ENCODE measurements at regions of chr6 and their contacts with region 1.

Region 1: DNA sequence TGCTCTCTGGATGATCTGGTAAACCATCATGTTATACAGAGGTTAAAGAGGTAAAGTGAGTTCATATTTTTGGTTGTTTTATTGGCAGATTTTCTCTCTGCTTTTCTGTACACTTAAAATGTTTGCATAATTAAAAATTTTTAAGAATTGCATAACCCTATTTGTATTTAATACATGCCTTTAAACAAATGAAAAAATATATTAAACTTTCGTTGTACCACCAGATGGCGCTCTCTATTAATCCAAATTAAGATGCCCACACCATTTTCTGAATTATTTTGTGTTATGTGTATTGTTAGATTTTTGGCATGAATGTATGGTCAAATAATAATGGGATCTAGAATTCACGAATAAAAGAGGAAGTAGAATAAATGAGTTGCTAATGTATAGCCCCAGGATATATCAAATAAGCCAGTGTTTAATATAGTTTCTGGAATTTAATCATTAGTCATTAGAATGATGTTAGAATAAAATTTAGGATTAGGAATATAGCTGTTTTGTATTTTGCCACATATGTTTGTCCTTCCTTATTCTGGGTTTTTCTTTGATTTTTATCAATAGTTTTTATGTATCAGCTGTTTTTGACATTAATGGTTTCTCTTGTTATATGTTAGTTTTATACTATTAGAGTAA is 38.9 kb downstream of the SMAP1 start:
- DNase-seq: no peak
- H3K4me3 ChIP-seq: no peak overlapping the region
- H3K27ac ChIP-seq: no peak overlapping the region
- H3K4me1 ChIP-seq: peaks cover 0 to 6% (median 0%) of the 10 kb centered on the region in 4 experiments; a peak in 1 of 7 replicates
- H3K27me3 ChIP-seq: no peaks in the 10 kb centered on the region
- CTCF ChIP-seq: peak in 2 of 3 experiments; percentile 13 to 39; a peak in 2 of 4 replicates
- EP300 ChIP-seq: no peak
- POLR2A ChIP-seq: no peak
- RAD21 ChIP-seq: peak; percentile 51 to 63

Region 2: GRCh38 chr6:70693887-70694286 is 12.7 kb before region 1 on chr6:
- CTCF ChIA-PET with region 1: interaction called, 10 read pairs
- POLR2A ChIA-PET with region 1: interaction called, 3 read pairs
- DNase-seq: no peak
- H3K4me3 ChIP-seq: no peak overlapping the region
- H3K27ac ChIP-seq: no peak overlapping the region
- H3K4me1 ChIP-seq: no peaks in the 10 kb centered on the region
- H3K27me3 ChIP-seq: no peaks in the 10 kb centered on the region
- CTCF ChIP-seq: no peak
- EP300 ChIP-seq: no peak
- POLR2A ChIP-seq: no peak
- RAD21 ChIP-seq: no peak

Region 3: DNA sequence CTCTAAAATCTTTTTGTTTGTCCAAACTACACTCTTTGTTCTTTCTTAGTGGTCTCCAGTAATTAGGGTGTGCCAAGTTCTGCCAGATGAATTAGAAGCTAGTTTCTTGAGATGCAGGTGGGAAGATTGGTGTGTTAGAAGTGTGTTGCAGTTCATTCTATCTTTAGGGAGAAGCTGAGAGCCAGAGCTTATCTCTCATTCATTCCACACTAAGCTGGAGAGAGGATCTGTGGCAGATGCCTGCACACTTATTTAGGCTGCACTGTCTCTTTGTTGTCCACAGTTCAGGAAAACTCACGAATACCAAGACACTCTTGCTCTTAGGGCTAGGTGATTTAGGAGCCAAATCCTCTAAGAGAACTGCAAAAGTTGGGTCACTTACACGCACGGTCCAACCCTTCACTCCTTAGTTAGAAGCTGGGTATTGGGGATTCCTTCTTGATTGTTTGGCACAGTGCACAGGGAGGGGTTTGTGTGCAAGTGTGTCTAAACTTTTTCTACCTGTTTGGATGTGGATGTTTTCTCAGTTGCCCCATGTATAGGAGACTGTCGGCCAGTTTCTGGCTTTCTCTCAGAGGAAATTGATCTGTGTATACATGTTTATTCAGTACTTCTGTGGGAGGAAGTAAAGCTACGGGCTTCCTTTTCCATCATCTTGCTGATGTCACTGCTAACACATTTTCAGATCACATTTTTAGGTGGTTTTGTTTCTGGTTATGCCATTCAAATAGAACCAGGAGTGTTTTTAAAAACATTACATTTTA is 10.6 kb after region 1 on chr6:
- CTCF ChIA-PET with region 1: interaction called, 19 read pairs
- POLR2A ChIA-PET with region 1: no interaction called
- DNase-seq: no peak
- H3K4me3 ChIP-seq: no peak overlapping the region
- H3K27ac ChIP-seq: no peak overlapping the region
- H3K4me1 ChIP-seq: no peaks in the 10 kb centered on the region
- H3K27me3 ChIP-seq: no peaks in the 10 kb centered on the region
- CTCF ChIP-seq: no peak
- EP300 ChIP-seq: no peak
- POLR2A ChIP-seq: no peak
- RAD21 ChIP-seq: no peak

Region 4: DNA sequence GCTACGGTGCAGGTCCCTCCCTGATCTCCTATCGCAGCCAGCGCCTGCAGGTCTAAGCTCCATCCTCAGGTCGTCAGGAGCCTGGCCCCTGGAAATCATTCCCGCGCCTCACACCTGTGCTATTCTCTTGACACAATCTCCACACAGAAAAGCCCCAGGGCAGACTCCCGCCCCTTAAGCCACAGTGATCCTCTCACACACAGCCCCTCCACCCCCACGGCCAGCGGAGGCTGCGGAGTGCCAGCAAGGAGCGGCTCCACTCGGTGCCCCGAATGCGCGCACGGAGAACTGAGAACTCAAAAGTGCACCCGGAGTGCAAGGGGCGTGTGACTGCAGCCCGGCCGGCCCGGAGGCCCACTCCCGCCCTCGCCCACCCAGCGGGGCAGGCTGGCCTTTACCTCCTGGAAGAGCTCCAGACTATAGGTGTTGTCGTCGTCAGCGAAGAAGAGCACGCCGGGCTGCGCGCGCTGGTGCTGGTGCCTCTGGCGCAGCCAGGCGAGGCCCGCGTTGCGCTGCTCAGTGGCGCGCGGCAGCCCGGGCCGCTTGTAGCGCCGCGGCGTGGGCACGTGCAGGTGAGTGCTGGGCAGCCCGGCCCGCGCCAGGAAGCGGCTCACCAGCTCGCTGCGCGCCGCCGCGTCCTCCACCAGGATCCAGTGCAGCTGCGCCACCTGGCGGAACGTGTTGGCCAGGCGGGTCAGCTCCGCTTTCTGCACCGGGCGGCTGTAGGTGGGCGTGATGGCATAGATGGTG is 249.0 kb after region 1 on chr6:
- CTCF ChIA-PET with region 1: interaction called, 49 read pairs
- POLR2A ChIA-PET with region 1: no interaction called
- DNase-seq: peak; percentile 70 to 99
- H3K4me3 ChIP-seq: peak overlapping the region; percentile 16 to 68 (median 38)
- H3K27ac ChIP-seq: no peak overlapping the region
- H3K4me1 ChIP-seq: peaks cover 0 to 4% (median 1%) of the 10 kb centered on the region in 4 experiments; a peak in 4 of 7 replicates
- H3K27me3 ChIP-seq: peaks cover 14 to 51% (median 39%) of the 10 kb centered on the region in 4 experiments
- CTCF ChIP-seq: peak; percentile 95 to 98 (median 95)
- EP300 ChIP-seq: no peak; a peak in 1 of 3 replicates
- POLR2A ChIP-seq: no peak
- RAD21 ChIP-seq: peak; percentile 84 to 92

Measured in H1 (cell line).